ENCODE measurements at regions of chr16 and their contacts with region 1.

Region 1: GRCh38 chr16:67521095-67521804 is 7.4 kb upstream of the RIPOR1 start:
- DNase-seq: peak; percentile 97 to 98
- ATAC-seq: peak; percentile 97
- H3K4me3 ChIP-seq: peak overlapping the region in 1 of 2 donors; percentile 67
- H3K27ac ChIP-seq: peak overlapping the region; percentile 10 to 96
- H3K4me1 ChIP-seq: no peaks in the 10 kb centered on the region
- H3K27me3 ChIP-seq: no peaks in the 10 kb centered on the region

Region 2: DNA sequence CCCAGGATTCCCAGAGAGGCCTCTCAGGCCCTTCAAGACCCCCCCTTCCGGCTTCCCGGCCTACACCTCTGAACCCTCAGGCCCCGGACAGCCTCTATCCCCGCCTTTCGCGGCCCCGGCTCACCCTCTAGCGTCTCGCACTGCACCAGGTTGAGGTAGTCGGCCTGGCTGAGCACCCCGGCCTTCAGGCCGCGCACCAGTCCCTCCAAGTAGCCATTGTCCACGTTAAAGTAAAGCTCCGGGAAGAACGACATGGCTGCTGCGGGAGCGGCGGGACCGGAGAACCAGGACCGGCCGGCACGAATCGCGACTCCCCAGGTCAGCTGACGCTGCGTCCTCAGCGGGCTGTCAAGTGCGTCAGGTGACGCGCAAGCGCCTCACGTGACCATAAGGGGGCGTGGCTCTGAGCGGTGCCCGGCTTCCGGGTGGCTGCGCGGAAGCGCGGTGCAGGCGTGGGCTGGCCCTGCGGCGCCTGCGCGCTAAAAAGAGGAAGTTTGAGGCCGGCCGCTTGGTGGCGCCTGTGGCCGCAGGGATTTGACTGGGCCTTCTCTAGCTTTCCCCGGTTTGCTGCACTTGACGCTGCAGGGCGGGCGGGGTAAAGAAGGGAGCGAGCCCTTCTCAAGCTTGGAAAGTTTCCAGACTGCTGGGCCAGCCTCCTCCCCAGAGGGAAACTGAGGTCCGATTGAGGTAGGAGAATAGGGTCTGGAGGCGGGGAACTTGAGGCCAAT is 40.3 kb before region 1 on chr16 and contains the start of gene ATP6V0D1:
- intact Hi-C with region 1: loop called in 1 of 2 experiments (anchors 5 kb)
- DNase-seq: peak; percentile 99 to 100
- ATAC-seq: peak; percentile 98
- H3K4me3 ChIP-seq: peak within 1 kb of the TSS; percentile 64 to 86
- H3K27ac ChIP-seq: peak within 1 kb of the TSS in 1 of 2 donors; percentile 66
- H3K4me1 ChIP-seq: no peaks in the 10 kb centered on the region
- H3K27me3 ChIP-seq: no peaks in the 10 kb centered on the region
- total RNA-seq, gene ATP6V0D1: 58.7 to 62.0 TPM

Region 3: DNA sequence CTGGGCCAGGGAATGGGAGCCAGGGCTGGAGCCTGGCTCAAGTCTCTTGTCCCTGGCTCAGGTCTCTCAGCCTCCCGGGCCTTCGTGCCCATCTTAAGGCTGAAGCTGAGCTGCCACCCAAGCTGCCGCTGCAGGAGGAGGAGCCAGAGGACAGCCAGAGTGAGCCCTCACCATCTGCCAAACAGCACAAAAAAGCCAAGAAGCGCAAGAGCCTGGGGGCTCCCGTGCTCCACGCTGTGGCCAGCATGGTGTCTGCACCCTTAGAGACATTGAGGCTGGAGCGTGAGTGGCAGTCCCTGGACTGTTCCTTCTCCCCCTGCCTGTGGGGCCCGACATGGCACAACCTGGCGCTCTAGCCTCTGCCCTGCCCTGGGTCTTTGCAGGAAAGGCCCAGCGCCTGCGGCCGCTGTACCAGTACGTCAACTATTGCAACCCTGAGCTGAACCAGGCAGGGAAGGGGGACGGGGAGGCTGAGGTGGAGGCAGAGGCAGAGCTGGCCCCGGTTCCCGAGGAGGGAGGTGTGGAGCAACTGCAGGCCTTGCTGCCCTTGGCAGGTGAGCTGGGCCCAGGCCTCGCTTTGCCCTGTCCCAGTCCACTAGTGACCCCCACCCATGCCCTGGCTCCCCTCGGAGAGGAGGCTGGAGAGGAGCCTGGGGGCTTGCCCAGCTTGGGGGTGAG is 146.7 kb after region 1 on chr16:
- intact Hi-C with region 1: loop called (anchors 2 kb)
- DNase-seq: peak; percentile 92 to 93
- ATAC-seq: peak; percentile 87
- H3K4me3 ChIP-seq: no peak overlapping the region
- H3K27ac ChIP-seq: peak overlapping the region in 1 of 2 donors; percentile 4
- H3K4me1 ChIP-seq: no peaks in the 10 kb centered on the region
- H3K27me3 ChIP-seq: no peaks in the 10 kb centered on the region

Measured in aorta (tissue), 5 donors.